ENCODE measurements at regions of chr20 and their contacts with region 1.

Region 1: DNA sequence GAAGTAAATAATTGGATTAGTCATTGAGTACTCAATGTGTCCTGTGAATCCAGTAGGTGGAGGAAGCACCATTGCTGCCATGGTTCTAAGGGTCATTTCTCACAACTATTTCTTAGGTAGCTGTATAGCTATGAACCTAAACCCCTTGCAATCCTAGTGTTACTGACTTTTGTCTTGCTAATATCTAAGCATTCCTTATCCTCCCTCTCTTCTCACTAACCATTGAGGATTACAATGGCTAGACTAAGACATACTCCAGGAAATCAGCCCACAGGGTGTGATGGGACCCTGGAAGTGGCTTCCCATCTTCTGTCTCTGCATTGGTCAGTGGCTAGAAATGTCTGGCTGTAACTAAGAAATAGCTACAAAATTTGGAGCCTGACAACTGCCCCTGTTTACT is 27.3 kb upstream of the FOXA2 start:
- DNase-seq: no peak
- H3K4me3 ChIP-seq: no peak overlapping the region
- H3K27ac ChIP-seq: no peak overlapping the region
- H3K4me1 ChIP-seq: no peaks in the 10 kb centered on the region
- H3K27me3 ChIP-seq: peaks cover 0 to 16% of the 10 kb centered on the region in 2 donors
- CTCF ChIP-seq: no peak
- POLR2A ChIP-seq: no peak

Region 2: DNA sequence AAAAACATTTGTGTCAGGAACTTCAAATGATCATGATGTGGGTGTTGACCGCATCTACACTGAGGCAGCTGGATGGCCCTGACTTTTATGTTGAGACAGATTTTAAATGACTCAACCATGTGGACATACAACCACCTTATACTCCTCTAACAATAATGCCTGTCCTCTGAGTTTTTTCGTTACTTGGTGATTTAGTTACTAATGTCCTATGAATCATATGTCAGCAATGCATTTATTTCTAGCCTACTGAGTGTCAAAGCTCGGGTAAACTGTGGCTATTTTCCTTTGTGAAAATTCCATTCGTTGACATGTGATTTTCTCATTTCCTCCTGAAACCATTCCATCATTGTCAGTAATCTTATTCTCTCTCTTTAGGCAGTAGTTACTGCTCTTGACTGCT is 1175.4 kb before region 1 on chr20:
- intact Hi-C with region 1: no loop called
- DNase-seq: no peak
- H3K4me3 ChIP-seq: no peak overlapping the region
- H3K27ac ChIP-seq: no peak overlapping the region
- H3K4me1 ChIP-seq: no peaks in the 10 kb centered on the region
- H3K27me3 ChIP-seq: peaks cover 0 to 13% of the 10 kb centered on the region in 2 donors
- CTCF ChIP-seq: no peak
- POLR2A ChIP-seq: no peak

Region 3: DNA sequence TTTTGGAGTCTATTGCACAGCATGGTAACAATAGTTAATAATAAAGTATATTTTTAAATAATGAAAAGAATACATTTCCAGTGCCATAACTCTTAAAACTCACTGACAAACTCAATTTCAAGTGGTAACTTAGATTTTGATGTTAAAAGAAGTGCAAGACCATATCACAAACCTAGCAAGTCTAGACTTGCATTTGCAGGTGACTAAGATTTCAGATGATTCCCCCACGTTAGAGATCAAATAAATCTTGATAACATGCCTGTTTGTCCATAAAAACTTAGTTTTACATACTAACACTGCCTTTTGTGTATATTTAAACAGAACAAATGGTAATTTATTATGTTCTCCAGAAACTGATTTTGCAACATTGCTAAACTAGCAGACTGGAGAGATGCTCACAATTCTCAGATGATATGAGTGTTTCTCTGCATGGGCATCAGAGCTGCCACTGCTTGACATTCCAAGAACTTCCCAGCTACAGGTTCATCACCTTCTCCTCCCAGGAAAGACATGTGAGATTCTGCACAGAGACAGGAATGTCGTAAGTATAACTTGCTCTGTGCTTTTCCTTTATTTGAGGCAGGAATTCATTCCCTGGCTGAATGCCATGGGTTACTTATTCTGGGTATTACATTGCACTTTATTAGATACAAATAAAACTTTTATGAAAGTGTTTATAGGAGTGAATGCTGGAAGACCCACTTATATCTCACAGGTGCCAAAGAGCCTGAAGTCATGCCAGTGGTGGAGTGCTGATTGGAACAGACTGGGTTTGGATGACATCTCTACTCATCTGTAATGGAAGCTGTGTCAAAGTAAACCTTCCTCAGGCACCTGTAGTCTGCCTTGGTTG is 132.9 kb after region 1 on chr20:
- intact Hi-C with region 1: loop called (anchors 5 kb)
- DNase-seq: no peak
- H3K4me3 ChIP-seq: no peak overlapping the region
- H3K27ac ChIP-seq: no peak overlapping the region
- H3K4me1 ChIP-seq: no peaks in the 10 kb centered on the region
- H3K27me3 ChIP-seq: no peaks in the 10 kb centered on the region
- CTCF ChIP-seq: no peak
- POLR2A ChIP-seq: no peak

Region 4: GRCh38 chr20:23132930-23133559 is 521.4 kb after region 1 on chr20:
- intact Hi-C with region 1: no loop called
- DNase-seq: peak in 1 of 2 donors; percentile 35
- H3K4me3 ChIP-seq: no peak overlapping the region
- H3K27ac ChIP-seq: peak overlapping the region; percentile 10 to 52
- H3K4me1 ChIP-seq: no peaks in the 10 kb centered on the region
- H3K27me3 ChIP-seq: no peaks in the 10 kb centered on the region
- CTCF ChIP-seq: no peak
- POLR2A ChIP-seq: no peak